CD8-positive, alpha-beta T cell (primary cell): ENCODE measurements at regions of chr7 and their contacts with region 1.

Region 1: GRCh38 chr7:94028768-94029167 is 24.6 kb upstream of the BET1 start:
- DNase-seq: no peak
- ATAC-seq: no peak
- H3K4me3 ChIP-seq: no peak overlapping the region
- H3K4me3 Mint-ChIP-seq: no peak overlapping the region
- H3K27ac ChIP-seq: no peak overlapping the region
- H3K27ac Mint-ChIP-seq: no peak overlapping the region
- H3K4me1 ChIP-seq: no peaks in the 10 kb centered on the region
- H3K4me1 Mint-ChIP-seq: no peaks in the 10 kb centered on the region
- H3K27me3 ChIP-seq: no peaks in the 10 kb centered on the region
- H3K27me3 Mint-ChIP-seq: peaks cover 30% of the 10 kb centered on the region
- CTCF ChIP-seq: no peak

Region 2: GRCh38 chr7:94142281-94142680 is 113.5 kb after region 1 on chr7:
- CTCF ChIA-PET with region 1: no interaction called
- POLR2A ChIA-PET with region 1: no interaction called
- intact Hi-C with region 1: loop called in 1 of 2 experiments (anchors 5 kb)
- DNase-seq: no peak
- ATAC-seq: no peak
- H3K4me3 ChIP-seq: no peak overlapping the region
- H3K4me3 Mint-ChIP-seq: no peak overlapping the region
- H3K27ac ChIP-seq: no peak overlapping the region
- H3K27ac Mint-ChIP-seq: no peak overlapping the region
- H3K4me1 ChIP-seq: no peaks in the 10 kb centered on the region
- H3K4me1 Mint-ChIP-seq: no peaks in the 10 kb centered on the region
- H3K27me3 ChIP-seq: no peaks in the 10 kb centered on the region
- H3K27me3 Mint-ChIP-seq: peaks cover 7% of the 10 kb centered on the region
- CTCF ChIP-seq: no peak